ENCODE measurements at regions of chr22 and their contacts with region 1.

Region 1: DNA sequence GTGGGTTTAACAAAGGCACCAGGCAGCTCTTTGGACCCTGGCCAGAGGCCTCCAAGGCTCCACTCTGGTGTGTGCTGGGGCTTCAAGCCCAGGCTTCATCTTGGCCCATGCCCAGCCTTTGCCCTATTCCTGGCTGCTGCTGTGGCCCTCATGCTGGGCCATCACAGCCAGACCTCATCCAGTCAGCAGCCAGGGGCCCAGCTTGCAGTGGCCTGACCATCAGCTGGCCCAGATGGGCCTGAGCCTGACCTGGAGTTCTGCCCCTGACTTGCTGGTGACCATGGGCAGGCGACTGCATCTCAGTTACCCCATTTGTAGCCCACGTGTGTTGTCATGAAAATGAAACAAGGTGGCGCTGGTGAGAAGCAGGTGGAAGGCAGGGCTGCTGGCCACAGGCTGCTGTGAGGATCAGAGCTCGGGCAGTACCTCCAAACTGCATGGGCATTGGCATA is 76.1 kb downstream of the MED15 start:
- DNase-seq: peak; percentile 45
- ATAC-seq: peak; percentile 56; the same call in 1 of the 2 replicates
- H3K4me3 Mint-ChIP-seq: no peak overlapping the region
- H3K27ac Mint-ChIP-seq: no peak overlapping the region
- H3K4me1 Mint-ChIP-seq: no peaks in the 10 kb centered on the region
- H3K27me3 Mint-ChIP-seq: no peaks in the 10 kb centered on the region
- CTCF ChIP-seq: no peak

Region 2: DNA sequence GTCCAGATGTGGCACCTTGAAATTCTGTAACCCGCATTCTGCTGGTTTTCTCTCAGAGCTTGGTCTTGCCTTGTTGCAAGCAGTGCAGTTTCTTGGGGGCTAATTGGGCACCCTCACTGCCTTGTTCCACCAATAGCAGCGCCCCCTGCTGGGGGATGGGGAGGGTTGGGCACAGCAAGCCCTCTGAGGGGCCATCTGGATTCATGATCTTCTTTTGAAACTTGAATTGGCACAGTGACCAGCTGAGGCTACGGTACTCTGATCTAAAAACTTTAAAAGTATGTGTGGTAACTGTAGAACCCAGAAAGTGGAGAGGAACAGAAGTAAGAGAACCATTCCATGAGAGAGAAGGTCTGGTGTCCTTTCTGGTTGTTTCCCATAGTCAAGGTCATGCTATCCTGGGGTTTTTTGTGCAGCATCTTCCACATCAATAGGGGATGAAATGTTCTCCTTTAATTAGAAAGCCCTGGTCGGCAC is 11.9 kb before region 1 on chr22:
- CTCF ChIA-PET with region 1: interaction called, 13 read pairs
- POLR2A ChIA-PET with region 1: no interaction called
- DNase-seq: peak; percentile 72
- ATAC-seq: peak; percentile 72
- H3K4me3 Mint-ChIP-seq: no peak overlapping the region
- H3K27ac Mint-ChIP-seq: no peak overlapping the region
- H3K4me1 Mint-ChIP-seq: no peaks in the 10 kb centered on the region
- H3K27me3 Mint-ChIP-seq: no peaks in the 10 kb centered on the region
- CTCF ChIP-seq: peak; percentile 72